Naive thymus-derived CD4-positive, alpha-beta T cell (primary cell): ENCODE measurements at regions of chr10 and their contacts with region 1.

Region 1: GRCh38 chr10:133124357-133125211 is 35.4 kb upstream of the KNDC1 start:
- DNase-seq: peak in 2 of 9 donors; percentile 21 to 38
- ATAC-seq: no peak
- H3K4me3 ChIP-seq: no peak overlapping the region
- H3K4me3 Mint-ChIP-seq: peak overlapping the region in 1 of 10 donors; percentile 61
- H3K27ac ChIP-seq: no peak overlapping the region
- H3K27ac Mint-ChIP-seq: no peak overlapping the region
- H3K4me1 ChIP-seq: no peaks in the 10 kb centered on the region
- H3K4me1 Mint-ChIP-seq: peaks cover 4 to 11% (median 6%) of the 10 kb centered on the region in 7 donors
- H3K27me3 ChIP-seq: no peaks in the 10 kb centered on the region
- H3K27me3 Mint-ChIP-seq: peaks cover 6 to 30% (median 13%) of the 10 kb centered on the region in 5 donors

Region 2: DNA sequence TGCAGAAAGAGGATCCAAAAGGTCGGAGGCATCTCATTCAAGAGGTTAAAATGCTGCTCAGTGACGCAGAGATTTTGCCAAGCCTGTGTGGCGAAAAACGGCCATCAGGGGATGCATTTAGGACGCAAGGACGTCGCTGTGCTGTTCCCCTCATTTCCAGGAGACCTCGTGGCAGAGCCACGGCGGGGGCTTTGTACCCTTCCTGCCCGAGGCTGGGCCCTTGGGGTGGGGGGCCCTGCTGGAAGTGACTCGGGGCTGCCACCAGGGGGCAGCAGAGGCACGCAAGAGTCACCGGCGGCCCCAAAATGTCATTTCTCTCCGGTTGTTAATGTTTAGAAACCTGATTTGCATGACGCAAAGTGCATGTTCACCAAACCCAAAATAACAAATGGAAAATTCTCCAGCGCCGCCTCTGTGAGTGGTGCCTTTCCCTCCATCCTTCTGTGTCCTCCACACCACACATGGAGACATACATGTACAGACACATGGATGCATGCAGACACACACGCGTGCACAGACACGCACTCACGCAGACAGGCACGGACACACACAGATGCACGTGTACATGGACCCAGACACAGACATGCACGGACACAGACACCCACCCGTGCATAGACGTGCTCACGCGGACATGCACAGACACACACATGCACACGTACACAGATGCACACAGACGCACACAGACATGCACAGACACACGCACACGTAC is 287.6 kb before region 1 on chr10:
- CTCF ChIA-PET with region 1: no interaction called
- POLR2A ChIA-PET with region 1: no interaction called
- intact Hi-C with region 1: loop called in 1 of 2 experiments (anchors 5 kb)
- DNase-seq: peak in 7 of 9 donors; percentile 40 to 67 (median 51)
- ATAC-seq: peak; percentile 58
- H3K4me3 ChIP-seq: no peak overlapping the region
- H3K4me3 Mint-ChIP-seq: no peak overlapping the region
- H3K27ac ChIP-seq: no peak overlapping the region
- H3K27ac Mint-ChIP-seq: no peak overlapping the region
- H3K4me1 ChIP-seq: no peaks in the 10 kb centered on the region
- H3K4me1 Mint-ChIP-seq: no peaks in the 10 kb centered on the region
- H3K27me3 ChIP-seq: no peaks in the 10 kb centered on the region
- H3K27me3 Mint-ChIP-seq: peaks cover 0 to 9% (median 2%) of the 10 kb centered on the region in 5 donors

Region 3: GRCh38 chr10:132939957-132940790 is 184.4 kb before region 1 on chr10:
- CTCF ChIA-PET with region 1: no interaction called
- POLR2A ChIA-PET with region 1: no interaction called
- intact Hi-C with region 1: loop called in 1 of 2 experiments (anchors 2 kb)
- DNase-seq: peak in 1 of 9 donors; percentile 43
- ATAC-seq: peak; percentile 49
- H3K4me3 ChIP-seq: no peak overlapping the region
- H3K4me3 Mint-ChIP-seq: peak overlapping the region in 3 of 10 donors; percentile 45 to 53 (median 47)
- H3K27ac ChIP-seq: no peak overlapping the region
- H3K27ac Mint-ChIP-seq: no peak overlapping the region
- H3K4me1 ChIP-seq: no peaks in the 10 kb centered on the region
- H3K4me1 Mint-ChIP-seq: peaks cover 0 to 10% (median 5%) of the 10 kb centered on the region in 7 donors
- H3K27me3 ChIP-seq: no peaks in the 10 kb centered on the region
- H3K27me3 Mint-ChIP-seq: peaks cover 41 to 60% (median 51%) of the 10 kb centered on the region in 5 donors